Heart left ventricle (tissue), 16 donors: ENCODE measurements at regions of chr10 and their contacts with region 1.

Region 1: GRCh38 chr10:104337974-104338735 is at the start of gene ITPRIP:
- DNase-seq: peak; percentile 82 to 88 (median 84)
- ATAC-seq: peak; percentile 53 to 80 (median 78)
- H3K4me3 ChIP-seq: peak within 1 kb of the TSS; percentile 70 to 99 (median 89)
- H3K27ac ChIP-seq: peak within 1 kb of the TSS; percentile 96 to 100 (median 99)
- H3K4me1 ChIP-seq: peaks cover 10 to 61% (median 52%) of the 10 kb centered on the region in 12 donors
- H3K27me3 ChIP-seq: no peaks in the 10 kb centered on the region
- CTCF ChIP-seq: peak in 6 of 12 donors; percentile 11 to 49 (median 30)
- POLR2A ChIP-seq: peak in 1 of 2 donors; percentile 98
- total RNA-seq, gene ITPRIP: 18.4 to 90.2 (median 27.7) TPM

Region 2: GRCh38 chr10:103605359-103606095 is 732.6 kb before region 1 on chr10:
- intact Hi-C with region 1: no loop called
- DNase-seq: peak in 4 of 5 donors; percentile 46 to 60 (median 54)
- ATAC-seq: peak; percentile 24 to 66 (median 53)
- H3K4me3 ChIP-seq: no peak overlapping the region
- H3K27ac ChIP-seq: no peak overlapping the region
- H3K4me1 ChIP-seq: peaks cover 0 to 10% (median 2%) of the 10 kb centered on the region in 12 donors
- H3K27me3 ChIP-seq: no peaks in the 10 kb centered on the region
- CTCF ChIP-seq: peak; percentile 66 to 84 (median 78)
- POLR2A ChIP-seq: no peak

Region 3: DNA sequence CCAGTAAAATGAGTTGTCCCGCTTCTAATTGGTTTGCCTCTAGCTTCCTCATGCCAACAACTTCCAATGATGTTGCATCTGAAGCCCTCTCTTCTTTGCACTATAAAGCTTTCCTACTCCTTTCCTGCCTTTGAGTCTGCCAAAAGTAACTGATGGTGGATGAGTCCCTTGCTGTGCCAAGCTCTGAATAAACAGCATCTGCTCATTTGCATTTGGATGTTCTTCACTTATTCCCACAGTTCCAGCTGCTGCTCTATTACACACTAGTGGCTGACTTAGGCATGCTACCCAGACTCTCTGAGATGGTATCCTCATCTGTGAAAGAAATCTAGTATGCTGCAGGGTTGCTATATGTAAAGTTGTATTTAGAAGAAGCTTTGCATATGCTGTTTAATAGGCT is 191.3 kb before region 1 on chr10:
- intact Hi-C with region 1: no loop called
- DNase-seq: no peak
- ATAC-seq: no peak
- H3K4me3 ChIP-seq: no peak overlapping the region
- H3K27ac ChIP-seq: no peak overlapping the region
- H3K4me1 ChIP-seq: no peaks in the 10 kb centered on the region
- H3K27me3 ChIP-seq: peaks cover 0 to 3% (median 0%) of the 10 kb centered on the region in 9 donors
- CTCF ChIP-seq: no peak
- POLR2A ChIP-seq: no peak

Region 4: DNA sequence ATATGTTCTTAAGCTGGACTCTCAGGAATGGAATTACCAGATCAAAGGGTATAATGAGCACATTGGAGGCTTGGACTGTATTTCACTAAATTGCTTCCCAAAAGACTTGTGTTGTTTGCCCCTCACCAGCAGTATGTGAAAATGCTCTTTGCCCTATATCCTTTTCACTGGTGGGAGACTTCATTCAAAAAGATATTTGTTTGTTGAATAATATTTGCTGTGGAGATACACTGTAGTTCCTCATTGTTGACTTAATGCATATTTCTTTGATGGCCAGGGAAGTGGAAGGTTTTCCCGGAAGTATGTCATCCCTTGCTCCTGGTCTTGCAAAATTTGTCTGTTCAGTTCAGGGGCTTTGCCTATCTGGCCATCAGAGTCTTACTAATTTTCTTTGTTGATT is 49.8 kb before region 1 on chr10:
- intact Hi-C with region 1: no loop called
- DNase-seq: no peak
- ATAC-seq: no peak
- H3K4me3 ChIP-seq: no peak overlapping the region
- H3K27ac ChIP-seq: no peak overlapping the region
- H3K4me1 ChIP-seq: peaks cover 0 to 23% (median 5%) of the 10 kb centered on the region in 12 donors
- H3K27me3 ChIP-seq: no peaks in the 10 kb centered on the region
- CTCF ChIP-seq: no peak
- POLR2A ChIP-seq: no peak

Region 5: GRCh38 chr10:104300736-104301292 is 37.3 kb before region 1 on chr10:
- intact Hi-C with region 1: loop called in 8 of 10 experiments (anchors 1 to 5 kb)
- DNase-seq: peak; percentile 81 to 93 (median 84)
- ATAC-seq: peak; percentile 75 to 85 (median 76)
- H3K4me3 ChIP-seq: peak overlapping the region in 1 of 12 donors; percentile 13
- H3K27ac ChIP-seq: peak overlapping the region; percentile 74 to 98 (median 92)
- H3K4me1 ChIP-seq: peaks cover 0 to 81% (median 63%) of the 10 kb centered on the region in 12 donors
- H3K27me3 ChIP-seq: no peaks in the 10 kb centered on the region
- CTCF ChIP-seq: peak in 3 of 12 donors; percentile 10 to 32 (median 28)
- POLR2A ChIP-seq: no peak

Region 6: GRCh38 chr10:104308439-104308903 is 29.7 kb before region 1 on chr10:
- intact Hi-C with region 1: loop called in 5 of 10 experiments (anchors 1 to 5 kb)
- DNase-seq: no peak
- ATAC-seq: no peak
- H3K4me3 ChIP-seq: no peak overlapping the region
- H3K27ac ChIP-seq: peak overlapping the region in 10 of 12 donors; percentile 1 to 98 (median 90)
- H3K4me1 ChIP-seq: peaks cover 9 to 98% (median 71%) of the 10 kb centered on the region in 12 donors
- H3K27me3 ChIP-seq: no peaks in the 10 kb centered on the region
- CTCF ChIP-seq: no peak
- POLR2A ChIP-seq: no peak